ENCODE measurements at regions of chr4 and their contacts with region 1.

Region 1: DNA sequence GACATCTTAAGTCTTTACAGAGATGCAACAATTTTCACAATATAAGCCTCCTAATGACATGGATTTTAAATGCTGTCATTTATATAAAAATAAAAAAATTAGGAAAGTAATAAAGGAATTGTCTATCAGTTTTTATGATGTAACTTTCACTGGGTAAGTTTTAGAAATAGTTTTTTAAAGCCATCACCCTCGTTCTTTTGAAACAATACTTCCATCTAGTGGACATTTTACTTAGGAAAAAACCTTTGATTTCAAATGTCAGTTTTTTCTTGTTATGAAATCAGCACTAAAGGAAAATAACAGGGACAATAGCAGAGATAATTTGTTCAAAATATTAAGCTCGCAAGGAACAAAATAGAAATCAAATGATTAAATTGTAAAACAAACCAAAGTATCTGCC is 24.3 kb upstream of the NDNF start:
- DNase-seq: no peak
- ATAC-seq: no peak
- H3K4me3 ChIP-seq: no peak overlapping the region
- H3K27ac ChIP-seq: no peak overlapping the region
- H3K4me1 ChIP-seq: no peaks in the 10 kb centered on the region
- H3K27me3 ChIP-seq: no peaks in the 10 kb centered on the region
- CTCF ChIP-seq: peak; percentile 27; the same call in 1 of the 2 replicates

Region 2: GRCh38 chr4:120071192-120071795 is 1025.3 kb before region 1 on chr4:
- CTCF ChIA-PET with region 1: no interaction called
- POLR2A ChIA-PET with region 1: no interaction called
- in situ Hi-C with region 1: no loop called
- intact Hi-C with region 1: loop called (anchors 5 kb)
- DNase-seq: peak; percentile 33
- ATAC-seq: no peak
- H3K4me3 ChIP-seq: no peak overlapping the region
- H3K27ac ChIP-seq: no peak overlapping the region
- H3K4me1 ChIP-seq: peaks cover 29% of the 10 kb centered on the region; the same call in 1 of the 2 replicates
- H3K27me3 ChIP-seq: no peaks in the 10 kb centered on the region
- CTCF ChIP-seq: peak; percentile 54; the same call in 1 of the 2 replicates

Region 3: DNA sequence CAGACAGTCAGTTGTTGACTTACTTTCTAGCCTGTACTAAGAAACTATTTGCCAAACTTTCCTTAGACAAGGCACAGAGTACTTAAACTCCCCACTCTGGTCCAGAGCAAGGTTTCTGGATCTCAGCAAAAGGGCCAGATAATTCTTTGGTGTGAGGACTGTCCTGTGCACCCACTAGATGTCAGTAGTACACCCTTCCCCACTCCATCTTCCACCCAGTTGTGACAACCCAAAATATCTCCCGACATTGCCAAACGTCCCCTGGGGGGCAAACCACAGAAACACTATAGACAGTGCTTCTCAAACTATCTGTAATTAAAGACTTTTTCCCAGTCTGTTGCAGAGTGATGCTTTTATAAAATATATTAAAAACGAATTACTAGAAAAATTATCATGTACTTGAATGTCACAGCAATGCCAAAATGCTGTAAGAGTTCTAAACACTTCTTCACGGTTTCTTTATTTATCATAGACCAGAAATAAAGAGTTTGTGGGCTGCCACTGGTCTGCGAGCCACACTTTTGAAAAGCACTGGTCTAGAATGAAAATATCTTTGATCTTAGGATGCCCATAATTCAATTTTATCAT is 377.6 kb before region 1 on chr4:
- CTCF ChIA-PET with region 1: no interaction called
- POLR2A ChIA-PET with region 1: no interaction called
- in situ Hi-C with region 1: no loop called
- intact Hi-C with region 1: loop called (anchors 2 kb)
- DNase-seq: peak; percentile 20
- ATAC-seq: peak; percentile 78; the same call in 1 of the 2 replicates
- H3K4me3 ChIP-seq: no peak overlapping the region
- H3K27ac ChIP-seq: no peak overlapping the region
- H3K4me1 ChIP-seq: no peaks in the 10 kb centered on the region
- H3K27me3 ChIP-seq: no peaks in the 10 kb centered on the region
- CTCF ChIP-seq: peak; percentile 78